Right ventricle myocardium superior (tissue), 1 donor: ENCODE measurements at regions of chr12 and their contacts with region 1.

Region 1: DNA sequence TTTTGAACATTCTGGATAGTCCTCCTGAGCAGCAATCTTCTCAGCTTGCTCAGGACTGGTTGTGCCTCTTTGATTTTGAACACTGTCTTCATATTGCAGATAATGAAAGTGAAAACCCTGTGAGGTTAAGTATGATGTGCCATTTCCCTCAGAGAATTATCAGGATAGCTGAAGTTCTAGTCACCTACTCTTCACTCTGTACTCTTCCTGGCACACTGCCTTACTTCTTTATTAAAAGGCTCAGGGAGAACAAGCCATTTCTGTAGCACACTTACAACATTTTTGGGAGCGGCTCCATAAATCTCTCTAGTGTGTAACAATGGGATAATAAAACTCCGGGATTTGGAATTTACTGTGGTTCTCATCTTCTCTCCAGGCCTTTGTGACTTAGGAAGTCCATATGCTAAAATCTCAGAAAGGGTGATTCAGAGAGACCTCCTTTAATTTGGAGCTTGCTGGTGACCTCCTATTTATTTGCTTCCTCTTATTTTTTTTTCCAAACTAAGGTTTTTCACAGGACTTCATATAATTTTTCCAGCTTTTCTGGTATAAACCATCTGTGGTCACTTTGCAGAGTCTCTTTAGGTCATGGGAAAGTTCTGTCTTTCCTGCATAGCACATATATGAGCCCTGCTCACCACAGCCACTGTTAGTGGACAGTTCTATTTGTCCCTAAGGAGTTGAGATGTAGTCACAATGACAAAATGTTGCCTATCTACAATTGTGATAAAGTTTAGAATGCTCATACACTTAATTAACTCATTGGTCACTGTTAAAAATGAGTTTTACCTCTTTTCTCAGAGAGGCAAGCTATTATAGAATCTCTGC is 53.5 kb upstream of the LDHB start:
- DNase-seq: no peak
- ATAC-seq: peak; percentile 71

Region 2: GRCh38 chr12:21248679-21249078 is 462.5 kb before region 1 on chr12:
- intact Hi-C with region 1: no loop called
- DNase-seq: no peak
- ATAC-seq: peak; percentile 49

Region 3: GRCh38 chr12:21657326-21658077 is 53.7 kb before region 1 on chr12 and contains the start of gene LDHB:
- intact Hi-C with region 1: no loop called
- DNase-seq: peak; percentile 98
- ATAC-seq: peak; percentile 98
- total RNA-seq, gene LDHB: 2,064 TPM

Region 4: DNA sequence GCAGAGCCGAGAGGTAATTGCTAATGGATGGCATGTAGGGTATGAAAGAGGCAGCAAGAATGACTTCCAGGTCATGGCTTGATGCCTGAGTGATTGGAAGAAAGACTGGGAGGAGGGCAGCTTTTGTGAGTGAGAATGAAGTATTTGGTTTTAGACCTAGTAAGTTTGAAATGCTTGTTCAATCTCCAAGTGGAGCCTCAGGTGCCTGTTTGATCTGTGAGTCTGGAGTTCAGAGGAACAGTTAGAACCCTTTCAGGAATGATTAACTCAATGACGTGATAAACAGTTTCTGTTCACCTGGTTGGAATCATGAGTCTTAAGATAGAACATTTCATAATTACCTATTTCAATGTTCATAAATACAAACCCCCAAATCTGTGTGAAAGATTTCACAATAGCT is 52.9 kb after region 1 on chr12:
- intact Hi-C with region 1: loop called (anchors 10 kb)
- DNase-seq: no peak
- ATAC-seq: no peak